ENCODE measurements at regions of chr3 and their contacts with region 1.

Region 1: GRCh38 chr3:48439820-48440589 is at the starts of genes CCDC51 and TMA7:
- DNase-seq: peak; percentile 77
- H3K4me3 ChIP-seq: peak within 1 kb of the TSS; percentile 91
- H3K27ac ChIP-seq: peak within 1 kb of the TSS; percentile 65
- H3K27me3 ChIP-seq: no peaks in the 10 kb centered on the region
- CTCF ChIP-seq: no peak
- polyA plus RNA-seq, gene CCDC51: 9.5 and 11.1 TPM in 2 replicates
- polyA plus RNA-seq, gene TMA7: 207 and 316 TPM in 2 replicates

Region 2: GRCh38 chr3:48194446-48195071 is 245.4 kb before region 1 on chr3:
- CTCF ChIA-PET with region 1: interaction called, 169 read pairs
- POLR2A ChIA-PET with region 1: interaction called, 4 read pairs
- DNase-seq: no peak
- H3K4me3 ChIP-seq: no peak overlapping the region
- H3K27ac ChIP-seq: no peak overlapping the region
- H3K27me3 ChIP-seq: no peaks in the 10 kb centered on the region
- CTCF ChIP-seq: peak; percentile 86

Region 3: DNA sequence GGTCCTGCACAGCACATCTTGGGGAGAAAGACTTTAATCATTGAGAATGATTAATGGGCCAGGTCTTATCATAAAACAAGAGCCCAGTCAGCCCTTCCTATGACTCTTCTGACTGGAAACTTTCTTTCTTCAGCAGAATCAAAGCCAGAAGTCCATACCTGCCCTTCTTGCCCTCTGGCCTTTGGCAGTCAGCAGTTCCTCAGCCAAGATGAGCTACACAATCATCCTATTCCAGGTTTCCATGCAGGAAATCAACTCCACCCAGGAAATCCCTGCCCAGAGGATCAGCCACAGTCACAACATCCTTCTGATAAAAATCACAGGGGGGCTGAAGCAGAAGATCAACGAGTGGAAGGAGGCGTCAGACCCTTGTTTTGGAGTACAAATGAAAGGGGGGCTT is 172.2 kb before region 1 on chr3:
- CTCF ChIA-PET with region 1: interaction called, 404 read pairs
- POLR2A ChIA-PET with region 1: interaction called, 3 read pairs
- DNase-seq: no peak
- H3K4me3 ChIP-seq: no peak overlapping the region
- H3K27ac ChIP-seq: no peak overlapping the region
- H3K27me3 ChIP-seq: no peaks in the 10 kb centered on the region
- CTCF ChIP-seq: no peak

Region 4: DNA sequence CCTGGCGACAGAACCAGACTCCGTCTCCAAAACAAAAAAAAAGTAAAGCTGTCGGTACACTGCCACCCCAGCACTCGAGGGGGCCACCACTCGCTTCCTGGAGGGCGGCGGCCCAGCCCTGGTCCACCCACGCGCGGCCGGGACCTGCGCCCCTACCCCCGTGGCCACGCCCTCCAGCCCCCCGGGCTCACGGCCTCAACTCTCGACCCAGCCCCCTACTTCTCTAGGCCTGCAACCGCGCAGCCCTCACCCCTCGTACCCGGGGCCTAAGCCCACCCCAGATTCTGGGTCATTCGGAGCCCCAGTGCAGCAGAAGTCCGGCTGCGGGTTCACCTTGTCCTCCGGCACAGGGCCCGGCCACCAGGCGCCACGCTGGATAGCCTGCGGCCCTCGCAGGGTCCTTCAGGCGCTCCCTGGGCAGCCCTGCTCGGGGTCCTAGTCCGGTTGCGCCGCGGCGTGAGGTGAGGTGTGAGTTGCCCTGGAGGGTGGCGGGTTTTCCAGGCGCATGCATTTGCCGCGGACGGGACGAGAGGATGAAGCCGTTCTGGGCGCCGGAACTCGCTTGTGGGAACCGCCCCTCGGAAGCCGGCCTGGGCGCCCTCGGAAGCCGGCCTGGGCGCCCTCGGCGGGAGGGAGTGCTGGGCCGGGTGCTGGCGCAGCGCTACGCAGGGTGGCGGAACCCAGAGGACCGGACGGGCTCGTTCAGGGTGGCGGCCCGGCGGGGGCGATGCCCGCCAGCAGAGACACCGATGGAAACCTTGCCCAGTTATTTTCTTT is 138.8 kb before region 1 on chr3:
- CTCF ChIA-PET with region 1: interaction called, 25 read pairs
- POLR2A ChIA-PET with region 1: no interaction called
- DNase-seq: peak; percentile 70
- H3K4me3 ChIP-seq: peak within 1 kb of the TSS; percentile 82
- H3K27ac ChIP-seq: peak within 1 kb of the TSS; percentile 94
- H3K27me3 ChIP-seq: no peaks in the 10 kb centered on the region
- CTCF ChIP-seq: no peak

Region 5: DNA sequence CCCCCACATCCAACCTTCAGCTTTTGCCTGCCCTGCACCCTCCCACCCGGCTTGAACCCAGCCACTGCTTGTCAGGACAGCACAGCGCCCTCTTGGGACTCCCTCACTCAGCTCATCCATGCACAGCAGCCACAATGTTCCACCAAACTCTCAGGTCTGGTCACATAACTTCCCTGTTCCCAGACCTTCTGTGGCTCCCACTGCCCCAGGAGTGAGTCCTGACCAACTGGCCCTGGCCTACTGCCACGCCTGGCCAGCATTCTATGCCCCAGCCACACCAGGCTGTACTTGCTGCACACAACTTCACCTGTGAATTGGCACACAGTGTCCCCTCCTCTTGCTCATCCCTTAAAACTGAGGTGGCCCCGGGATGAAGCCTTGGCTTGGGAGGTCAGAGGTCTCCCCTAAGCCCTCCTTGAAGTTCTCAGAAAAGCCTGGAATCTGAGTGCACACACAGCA is 31.2 kb before region 1 on chr3:
- CTCF ChIA-PET with region 1: interaction called, 402 read pairs
- POLR2A ChIA-PET with region 1: no interaction called
- DNase-seq: no peak
- H3K4me3 ChIP-seq: no peak overlapping the region
- H3K27ac ChIP-seq: no peak overlapping the region
- H3K27me3 ChIP-seq: no peaks in the 10 kb centered on the region
- CTCF ChIP-seq: no peak

Region 6: DNA sequence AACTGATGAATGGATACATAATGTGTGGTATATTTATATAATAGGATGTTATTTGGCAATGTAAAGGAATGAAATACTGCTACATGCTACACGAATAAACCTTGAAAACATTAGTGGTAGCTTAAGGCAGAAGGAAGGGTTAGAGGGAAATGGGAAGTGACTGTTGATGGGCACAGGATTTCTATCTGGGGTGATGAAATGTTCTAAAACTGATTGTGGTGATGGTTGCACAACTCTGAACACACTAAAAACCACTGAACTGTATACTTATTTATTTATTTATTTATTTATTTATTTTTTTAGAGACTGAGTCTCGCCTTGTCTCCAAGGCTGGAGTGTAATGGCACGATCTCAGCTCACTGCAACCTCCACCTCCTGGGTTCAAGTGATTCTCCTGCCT is 88.7 kb after region 1 on chr3:
- CTCF ChIA-PET with region 1: interaction called, 13 read pairs
- POLR2A ChIA-PET with region 1: no interaction called
- DNase-seq: no peak
- H3K4me3 ChIP-seq: no peak overlapping the region
- H3K27ac ChIP-seq: no peak overlapping the region
- H3K27me3 ChIP-seq: no peaks in the 10 kb centered on the region
- CTCF ChIP-seq: no peak